Cardiac septum (tissue), 1 donor: ENCODE measurements at regions of chr1 and their contacts with region 1.

Region 1: GRCh38 chr1:225977937-225978748 is 21.0 kb downstream of the SDE2 start:
- DNase-seq: no peak

Region 2: DNA sequence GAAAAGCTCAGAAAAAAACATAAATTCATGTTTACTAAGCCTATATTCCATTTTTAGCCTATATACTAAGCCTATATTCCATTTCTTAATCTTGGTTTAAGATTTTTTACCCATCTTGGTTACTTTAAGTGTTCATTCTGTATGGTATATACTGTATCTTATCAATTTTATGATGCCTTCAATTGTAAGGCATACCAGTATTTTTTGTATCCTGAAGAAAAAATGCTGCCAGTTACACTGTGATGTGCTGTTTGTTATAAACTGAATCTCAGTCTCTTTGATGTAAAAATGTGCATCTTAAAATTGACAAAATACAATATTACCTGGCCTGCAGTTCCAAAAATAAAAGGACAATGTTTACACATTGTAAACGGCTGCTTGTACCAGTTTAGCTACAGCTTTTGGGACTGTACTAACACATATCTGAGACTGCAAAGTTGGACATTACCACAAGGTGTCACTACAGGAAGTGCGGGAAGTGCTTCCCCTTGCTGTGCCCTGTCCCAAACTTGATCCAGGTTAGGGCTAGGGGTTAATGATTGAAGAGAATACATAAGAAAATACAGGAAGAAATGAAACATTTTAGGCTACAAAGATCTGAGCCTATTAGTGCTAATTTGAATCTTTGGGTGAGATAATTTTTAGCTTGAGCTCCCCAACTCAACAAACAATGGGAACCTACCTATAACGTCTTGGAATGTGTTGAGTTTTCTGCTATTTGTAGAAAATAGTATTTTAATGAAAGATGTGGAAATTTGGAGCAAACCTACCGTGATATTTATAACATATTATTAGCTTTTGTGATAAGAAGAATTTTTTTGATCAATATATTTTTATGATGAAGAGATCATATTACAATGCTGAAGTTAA is 659.2 kb before region 1 on chr1:
- intact Hi-C with region 1: loop called (anchors 2 kb)
- DNase-seq: no peak

Region 3: GRCh38 chr1:225474986-225475820 is 502.9 kb before region 1 on chr1:
- intact Hi-C with region 1: loop called (anchors 2 kb)
- DNase-seq: peak; percentile 93

Region 4: DNA sequence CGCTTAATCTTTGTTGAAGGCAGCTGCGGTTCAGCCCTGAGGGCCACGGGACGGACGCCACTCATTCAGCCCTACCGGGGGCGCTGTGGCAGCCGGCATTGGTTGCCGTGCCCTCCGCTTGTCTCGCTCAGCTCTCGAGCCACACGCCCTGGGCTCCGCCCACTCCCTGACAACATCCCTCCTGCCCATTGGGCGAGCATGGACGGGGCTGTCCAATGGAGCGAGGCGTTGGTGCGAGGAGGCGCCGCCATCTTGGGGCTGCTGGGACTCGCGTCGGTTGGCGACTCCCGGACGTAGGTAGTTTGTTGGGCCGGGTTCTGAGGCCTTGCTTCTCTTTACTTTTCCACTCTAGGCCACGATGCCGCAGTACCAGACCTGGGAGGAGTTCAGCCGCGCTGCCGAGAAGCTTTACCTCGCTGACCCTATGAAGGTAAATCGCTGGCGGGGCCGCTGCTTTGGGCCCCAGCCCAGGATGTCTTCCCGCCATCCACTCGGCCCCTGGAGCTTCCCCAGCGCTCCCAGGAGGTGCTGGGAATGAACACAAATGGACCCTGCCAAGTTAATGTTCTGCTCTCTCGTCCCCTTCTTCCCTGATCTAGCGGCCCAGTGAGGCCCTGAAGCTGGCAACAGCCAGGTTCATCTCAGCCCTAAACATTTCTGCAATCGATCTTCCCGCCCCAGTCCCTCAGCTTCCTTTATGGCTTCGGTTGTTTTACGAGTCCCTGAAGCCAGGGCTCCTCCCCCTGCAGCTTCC is 200.4 kb before region 1 on chr1 and contains the start of gene SRP9:
- intact Hi-C with region 1: loop called (anchors 10 kb)
- DNase-seq: peak; percentile 99
- total RNA-seq, gene SRP9: 182 TPM

Region 5: DNA sequence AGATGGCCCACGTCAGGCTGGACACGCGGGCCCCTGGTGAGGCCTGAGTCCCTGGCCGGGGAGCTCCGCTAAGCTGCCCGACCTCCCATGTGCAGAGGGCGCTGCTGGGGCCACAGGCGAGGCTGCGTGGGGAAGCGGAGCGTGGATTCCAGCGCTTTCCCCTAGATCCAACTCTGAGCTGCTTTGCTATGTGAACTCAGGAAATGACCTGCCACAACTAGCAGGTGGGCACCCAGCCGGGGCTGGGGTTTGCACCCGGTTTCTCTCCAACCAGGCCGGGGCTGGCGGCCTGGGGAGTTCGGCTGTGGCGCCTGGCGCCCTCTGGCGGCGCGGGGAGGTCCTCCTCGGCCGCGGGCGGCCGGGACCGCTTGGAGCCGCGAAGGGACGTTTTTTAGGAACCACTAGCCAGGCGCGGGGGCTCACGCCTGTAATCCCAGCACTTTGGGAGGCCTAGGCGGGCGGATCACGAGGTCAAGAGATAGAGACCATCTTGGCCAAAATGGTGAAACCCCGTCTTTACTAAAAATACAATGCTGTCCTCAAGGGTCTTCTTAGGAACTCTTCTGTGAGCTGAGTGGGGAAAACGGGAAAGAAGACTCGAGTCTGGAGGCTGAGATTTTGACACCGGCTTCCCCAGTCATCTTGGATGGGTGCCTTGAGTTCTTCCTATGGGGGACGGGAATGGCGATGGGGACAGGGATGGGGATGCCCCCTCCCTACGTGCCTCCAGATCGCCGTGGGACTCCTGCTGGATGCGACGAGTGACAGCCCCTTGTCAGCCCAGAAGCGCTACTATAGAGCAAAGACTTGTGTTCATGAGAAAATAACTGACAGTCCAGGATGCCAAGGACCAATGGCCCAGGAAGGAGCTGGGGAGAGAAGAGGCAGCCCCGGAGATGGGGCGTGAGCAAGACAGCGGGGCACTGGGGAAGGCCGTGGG is 66.7 kb before region 1 on chr1:
- intact Hi-C with region 1: loop called (anchors 5 kb)
- DNase-seq: peak; percentile 81